Caco-2 (cell line): ENCODE measurements at regions of chr16 and their contacts with region 1.

Region 1: GRCh38 chr16:4580245-4580644 is 24.1 kb downstream of the C16orf96 start:
- DNase-seq: no peak
- H3K4me3 ChIP-seq: no peak overlapping the region
- H3K4me3 Mint-ChIP-seq: no peak overlapping the region
- H3K27ac Mint-ChIP-seq: no peak overlapping the region
- H3K4me1 ChIP-seq: no peaks in the 10 kb centered on the region
- H3K4me1 Mint-ChIP-seq: no peaks in the 10 kb centered on the region
- H3K27me3 ChIP-seq: no peaks in the 10 kb centered on the region
- H3K27me3 Mint-ChIP-seq: no peaks in the 10 kb centered on the region
- CTCF ChIP-seq: no peak

Region 2: GRCh38 chr16:4506450-4506849 is 73.8 kb before region 1 on chr16:
- CTCF ChIA-PET with region 1: no interaction called
- POLR2A ChIA-PET with region 1: no interaction called
- intact Hi-C with region 1: loop called (anchors 1 kb)
- DNase-seq: peak; percentile 58
- H3K4me3 ChIP-seq: no peak overlapping the region
- H3K4me3 Mint-ChIP-seq: no peak overlapping the region
- H3K27ac Mint-ChIP-seq: no peak overlapping the region
- H3K4me1 ChIP-seq: no peaks in the 10 kb centered on the region
- H3K4me1 Mint-ChIP-seq: peaks cover 1% of the 10 kb centered on the region
- H3K27me3 ChIP-seq: no peaks in the 10 kb centered on the region
- H3K27me3 Mint-ChIP-seq: no peaks in the 10 kb centered on the region
- CTCF ChIP-seq: peak; percentile 77 to 82

Region 3: DNA sequence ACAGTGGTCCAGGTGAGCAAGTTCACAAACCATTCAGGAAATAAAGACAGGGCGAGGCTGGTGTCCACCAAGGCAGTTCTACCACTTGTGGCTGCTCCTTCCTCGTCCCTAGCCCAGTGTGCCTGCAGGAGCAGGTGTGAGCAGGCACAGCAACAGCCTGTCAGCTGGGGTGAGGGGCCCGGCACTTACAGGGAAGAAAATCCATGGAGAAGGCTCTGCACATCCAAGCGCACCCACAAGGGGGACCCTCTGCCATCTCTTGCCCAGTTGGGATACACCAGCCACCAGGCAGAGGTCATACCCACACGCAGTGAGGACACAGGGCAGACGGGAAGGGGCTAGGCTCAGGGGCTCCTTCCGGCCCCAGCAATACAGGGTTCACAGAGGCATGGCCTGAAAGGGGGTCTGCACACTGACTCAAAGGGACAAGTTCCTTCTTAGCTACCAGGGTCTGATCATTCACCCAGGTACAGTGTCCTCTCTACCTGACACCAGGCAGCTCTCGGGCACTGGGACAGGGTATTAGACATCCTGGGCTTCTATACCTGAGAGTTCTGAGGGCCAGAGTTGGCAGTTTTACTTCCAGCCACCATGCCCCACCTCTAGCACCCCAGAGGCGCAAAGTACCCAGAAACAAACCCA is 68.7 kb before region 1 on chr16:
- CTCF ChIA-PET with region 1: interaction called, 3 read pairs
- POLR2A ChIA-PET with region 1: no interaction called
- intact Hi-C with region 1: loop called (anchors 1 kb)
- DNase-seq: peak; percentile 64 to 76
- H3K4me3 ChIP-seq: no peak overlapping the region
- H3K4me3 Mint-ChIP-seq: no peak overlapping the region
- H3K27ac Mint-ChIP-seq: no peak overlapping the region
- H3K4me1 ChIP-seq: no peaks in the 10 kb centered on the region
- H3K4me1 Mint-ChIP-seq: no peaks in the 10 kb centered on the region
- H3K27me3 ChIP-seq: no peaks in the 10 kb centered on the region
- H3K27me3 Mint-ChIP-seq: no peaks in the 10 kb centered on the region
- CTCF ChIP-seq: peak; percentile 46 to 70

Region 4: GRCh38 chr16:4624015-4624826 is 44.0 kb after region 1 on chr16 and contains the start of gene MGRN1:
- CTCF ChIA-PET with region 1: interaction called, 5 read pairs
- POLR2A ChIA-PET with region 1: no interaction called
- intact Hi-C with region 1: loop called (anchors 1 kb)
- DNase-seq: peak; percentile 95
- H3K4me3 ChIP-seq: peak within 1 kb of the TSS; percentile 99
- H3K4me3 Mint-ChIP-seq: peak within 1 kb of the TSS; percentile 84
- H3K27ac Mint-ChIP-seq: peak within 1 kb of the TSS; percentile 99
- H3K4me1 ChIP-seq: peaks cover 6% of the 10 kb centered on the region; the same call in 1 of the 2 replicates
- H3K4me1 Mint-ChIP-seq: peaks cover 8% of the 10 kb centered on the region
- H3K27me3 ChIP-seq: no peaks in the 10 kb centered on the region
- H3K27me3 Mint-ChIP-seq: no peaks in the 10 kb centered on the region
- CTCF ChIP-seq: peak; percentile 84 to 94
- total RNA-seq, gene MGRN1: 67.1 and 72.3 TPM in 2 replicates

Region 5: GRCh38 chr16:4682616-4683254 is 102.5 kb after region 1 on chr16:
- CTCF ChIA-PET with region 1: no interaction called
- POLR2A ChIA-PET with region 1: no interaction called
- intact Hi-C with region 1: no loop called
- DNase-seq: peak in 1 of 2 experiments; percentile 59
- H3K4me3 ChIP-seq: no peak overlapping the region
- H3K4me3 Mint-ChIP-seq: no peak overlapping the region
- H3K27ac Mint-ChIP-seq: no peak overlapping the region
- H3K4me1 ChIP-seq: no peaks in the 10 kb centered on the region
- H3K4me1 Mint-ChIP-seq: no peaks in the 10 kb centered on the region
- H3K27me3 ChIP-seq: no peaks in the 10 kb centered on the region
- H3K27me3 Mint-ChIP-seq: no peaks in the 10 kb centered on the region
- CTCF ChIP-seq: peak in 1 of 2 experiments; percentile 12